Calu3 (cell line): ENCODE measurements at regions of chr9 and their contacts with region 1.

Region 1: DNA sequence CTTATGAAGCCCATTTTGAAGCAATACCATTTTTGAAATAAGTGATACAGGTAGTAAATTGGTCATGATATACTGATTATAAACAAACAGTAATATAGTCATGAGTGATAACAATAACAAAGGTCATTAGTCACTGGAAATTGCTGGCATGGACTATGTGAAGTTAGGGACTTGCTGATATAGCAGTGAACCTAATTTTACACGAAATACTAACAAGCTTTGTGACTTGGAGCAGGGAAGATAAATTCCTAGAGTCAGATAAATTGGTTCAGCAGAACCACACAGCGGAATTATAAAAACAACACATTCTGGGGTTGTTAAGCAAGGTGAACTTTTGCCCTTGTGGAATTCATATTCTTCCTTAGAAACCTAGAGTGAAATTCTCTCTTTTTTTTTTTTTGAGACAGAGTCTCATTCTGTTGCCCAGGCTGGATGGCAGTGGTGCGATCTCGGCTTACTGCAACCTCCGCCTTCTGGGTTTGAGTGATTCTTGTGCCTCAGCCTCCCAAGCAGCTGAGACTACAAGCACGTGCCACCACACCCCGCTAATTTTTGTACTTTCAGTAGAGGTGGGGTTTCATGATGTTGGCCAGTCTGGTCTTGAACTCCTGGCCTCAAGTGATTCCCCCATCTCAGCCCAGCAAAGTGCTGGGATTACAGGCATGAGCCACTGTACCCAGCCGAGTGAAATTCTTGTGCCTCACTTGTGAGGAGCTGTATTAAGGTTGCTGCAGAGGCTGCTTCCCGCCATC is 6.0 kb downstream of the UGCG start:
- DNase-seq: no peak
- H3K4me3 Mint-ChIP-seq: peak overlapping the region; percentile 18
- H3K27ac Mint-ChIP-seq: no peak overlapping the region
- H3K4me1 Mint-ChIP-seq: peaks cover 38% of the 10 kb centered on the region
- H3K27me3 Mint-ChIP-seq: no peaks in the 10 kb centered on the region
- CTCF ChIP-seq: no peak

Region 2: DNA sequence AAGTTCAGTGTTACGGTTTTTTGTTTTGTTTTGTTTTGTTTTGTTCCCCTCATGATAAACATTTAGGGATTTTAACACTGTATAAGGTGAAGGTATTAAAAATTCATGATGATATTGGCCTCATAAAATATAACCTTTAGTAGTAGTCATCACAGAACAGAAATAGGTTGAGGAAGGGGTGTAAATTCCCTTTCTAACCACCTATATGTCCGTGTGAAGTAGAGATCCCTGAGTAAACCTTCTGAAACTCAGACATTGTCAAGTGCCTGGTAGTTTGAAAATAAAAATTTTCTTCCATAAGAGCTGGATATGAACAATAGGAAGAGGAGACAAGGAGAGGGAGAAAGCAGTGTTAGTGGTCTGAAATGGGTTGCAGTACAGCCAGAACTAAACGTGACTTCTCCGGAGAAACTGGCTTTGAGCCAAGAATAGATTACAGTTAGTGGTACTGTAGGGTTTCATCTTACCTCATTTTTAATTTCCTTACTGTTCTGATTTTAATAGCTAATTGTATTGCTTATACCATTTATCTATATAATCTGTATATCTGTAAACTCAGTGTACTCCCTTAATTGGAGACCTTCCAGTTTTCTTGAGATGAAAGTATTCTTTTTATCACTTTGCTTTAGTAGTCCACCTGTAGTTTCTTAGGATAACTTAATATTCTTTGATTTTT is 12.3 kb after region 1 on chr9:
- CTCF ChIA-PET with region 1: interaction called, 3 read pairs
- intact Hi-C with region 1: loop called (anchors 2 kb)
- DNase-seq: no peak
- H3K4me3 Mint-ChIP-seq: peak overlapping the region; percentile 69
- H3K27ac Mint-ChIP-seq: peak overlapping the region; percentile 63
- H3K4me1 Mint-ChIP-seq: peaks cover 43% of the 10 kb centered on the region
- H3K27me3 Mint-ChIP-seq: no peaks in the 10 kb centered on the region
- CTCF ChIP-seq: no peak

Region 3: DNA sequence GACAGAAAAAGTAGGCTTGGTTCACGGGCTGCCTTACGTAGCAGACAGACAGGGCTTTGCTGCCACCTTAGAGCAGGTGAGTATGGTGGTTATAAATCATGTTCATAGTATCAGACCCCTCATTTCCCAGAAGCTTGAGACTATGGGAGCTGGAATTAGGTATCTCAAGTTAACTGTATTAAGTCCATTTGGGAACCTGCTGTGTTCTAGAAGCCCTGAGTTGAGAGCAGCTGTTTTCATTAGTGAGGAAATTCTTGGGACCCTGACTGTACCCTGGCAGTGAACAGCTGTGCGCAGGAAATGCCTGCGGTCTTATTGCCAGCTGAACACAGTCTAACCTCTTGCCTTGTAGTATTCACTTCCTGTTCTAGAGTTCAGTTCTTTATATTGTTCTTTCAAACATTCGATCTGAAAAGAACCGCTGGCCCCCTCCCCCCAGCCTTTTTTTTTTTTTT is 23.9 kb after region 1 on chr9:
- CTCF ChIA-PET with region 1: no interaction called
- intact Hi-C with region 1: no loop called
- DNase-seq: no peak
- H3K4me3 Mint-ChIP-seq: no peak overlapping the region
- H3K27ac Mint-ChIP-seq: no peak overlapping the region
- H3K4me1 Mint-ChIP-seq: no peaks in the 10 kb centered on the region
- H3K27me3 Mint-ChIP-seq: no peaks in the 10 kb centered on the region
- CTCF ChIP-seq: no peak

Region 4: GRCh38 chr9:111957856-111958652 is 55.5 kb after region 1 on chr9:
- CTCF ChIA-PET with region 1: no interaction called
- intact Hi-C with region 1: loop called (anchors 5 kb)
- DNase-seq: peak; percentile 32
- H3K4me3 Mint-ChIP-seq: peak overlapping the region; percentile 57
- H3K27ac Mint-ChIP-seq: peak overlapping the region; percentile 79
- H3K4me1 Mint-ChIP-seq: peaks cover 73% of the 10 kb centered on the region
- H3K27me3 Mint-ChIP-seq: no peaks in the 10 kb centered on the region
- CTCF ChIP-seq: no peak

Region 5: GRCh38 chr9:111992523-111992922 is 90.0 kb after region 1 on chr9:
- CTCF ChIA-PET with region 1: no interaction called
- intact Hi-C with region 1: no loop called
- DNase-seq: peak; percentile 21
- H3K4me3 Mint-ChIP-seq: no peak overlapping the region
- H3K27ac Mint-ChIP-seq: peak overlapping the region; percentile 77
- H3K4me1 Mint-ChIP-seq: peaks cover 20% of the 10 kb centered on the region
- H3K27me3 Mint-ChIP-seq: no peaks in the 10 kb centered on the region
- CTCF ChIP-seq: no peak